Heart left ventricle (tissue), 16 donors: ENCODE measurements at regions of chr11 and their contacts with region 1.

Region 1: GRCh38 chr11:2305140-2305840 is 3.5 kb downstream of the TSPAN32 start:
- DNase-seq: peak; percentile 86 to 95 (median 87)
- ATAC-seq: peak in 3 of 4 donors; percentile 17 to 51 (median 47)
- H3K4me3 ChIP-seq: peak overlapping the region in 6 of 12 donors; percentile 5 to 33 (median 20)
- H3K27ac ChIP-seq: peak overlapping the region in 11 of 12 donors; percentile 64 to 98 (median 88)
- H3K4me1 ChIP-seq: peaks cover 9 to 64% (median 32%) of the 10 kb centered on the region in 12 donors
- H3K27me3 ChIP-seq: no peaks in the 10 kb centered on the region
- CTCF ChIP-seq: peak; percentile 85 to 97 (median 92)
- POLR2A ChIP-seq: no peak

Region 2: GRCh38 chr11:2208691-2209369 is 96.5 kb before region 1 on chr11:
- intact Hi-C with region 1: no loop called
- DNase-seq: peak in 3 of 5 donors; percentile 7 to 71 (median 20)
- ATAC-seq: peak in 1 of 4 donors; percentile 10
- H3K4me3 ChIP-seq: no peak overlapping the region
- H3K27ac ChIP-seq: no peak overlapping the region
- H3K4me1 ChIP-seq: no peaks in the 10 kb centered on the region
- H3K27me3 ChIP-seq: peaks cover 0 to 11% (median 0%) of the 10 kb centered on the region in 9 donors
- CTCF ChIP-seq: no peak
- POLR2A ChIP-seq: no peak

Region 3: GRCh38 chr11:2277008-2277346 is 28.3 kb before region 1 on chr11:
- intact Hi-C with region 1: no loop called
- DNase-seq: no peak
- ATAC-seq: no peak
- H3K4me3 ChIP-seq: no peak overlapping the region
- H3K27ac ChIP-seq: no peak overlapping the region
- H3K4me1 ChIP-seq: no peaks in the 10 kb centered on the region
- H3K27me3 ChIP-seq: peaks cover 0 to 11% (median 3%) of the 10 kb centered on the region in 9 donors
- CTCF ChIP-seq: no peak
- POLR2A ChIP-seq: no peak

Region 4: GRCh38 chr11:2290351-2290841 is 14.9 kb before region 1 on chr11:
- intact Hi-C with region 1: no loop called
- DNase-seq: peak in 1 of 5 donors; percentile 60
- ATAC-seq: peak in 1 of 4 donors; percentile 39
- H3K4me3 ChIP-seq: no peak overlapping the region
- H3K27ac ChIP-seq: peak overlapping the region in 2 of 12 donors; percentile 11 to 54
- H3K4me1 ChIP-seq: peaks cover 0 to 16% (median 3%) of the 10 kb centered on the region in 12 donors
- H3K27me3 ChIP-seq: peaks cover 0 to 3% (median 0%) of the 10 kb centered on the region in 9 donors
- CTCF ChIP-seq: no peak
- POLR2A ChIP-seq: no peak

Region 5: DNA sequence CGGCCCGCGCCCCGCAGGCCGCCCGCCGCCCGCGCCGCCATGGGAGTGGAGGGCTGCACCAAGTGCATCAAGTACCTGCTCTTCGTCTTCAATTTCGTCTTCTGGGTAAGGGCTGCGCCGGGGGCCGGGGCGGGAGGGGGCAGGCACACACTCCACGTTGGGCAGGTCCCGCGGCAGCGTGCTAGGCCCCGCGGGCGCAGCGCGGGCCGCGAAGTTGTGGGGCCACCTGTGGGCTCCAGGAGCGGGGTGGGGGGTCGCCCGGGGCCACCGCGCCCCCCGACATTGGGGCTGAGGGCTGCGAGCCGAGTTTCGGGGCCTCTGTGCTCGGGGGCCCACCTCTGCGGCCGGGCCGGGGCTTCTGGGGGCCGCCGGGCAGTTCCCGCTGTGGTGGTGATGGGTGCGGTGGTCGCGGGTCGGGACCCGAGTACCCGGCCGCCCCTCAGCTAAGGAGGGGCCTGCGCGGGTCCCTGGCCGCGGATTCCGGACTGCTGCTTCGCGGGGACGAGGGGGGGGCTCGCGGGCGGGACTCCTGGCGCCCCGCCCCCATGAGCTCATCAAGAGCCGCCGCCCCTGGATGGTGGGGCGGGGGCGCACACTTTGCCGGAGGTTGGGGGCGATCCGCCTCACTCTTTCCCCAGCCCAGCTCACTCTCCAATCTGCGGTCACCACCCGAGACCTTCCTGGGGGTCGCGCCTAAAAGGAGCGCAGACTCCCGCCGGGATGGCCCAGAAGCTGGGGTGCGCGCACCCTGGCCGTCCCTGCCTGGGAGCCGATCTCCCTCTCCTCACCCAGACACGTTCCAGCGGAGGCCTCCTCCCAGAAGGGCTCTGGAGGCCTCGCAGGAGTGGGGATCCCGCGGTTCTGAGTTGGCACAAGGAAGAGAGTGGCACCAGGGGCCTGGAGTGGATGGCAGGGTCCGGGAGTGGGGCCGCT is 72.5 kb after region 1 on chr11:
- intact Hi-C with region 1: loop called in 8 of 10 experiments (anchors 1 to 5 kb)
- DNase-seq: peak in 4 of 5 donors; percentile 79 to 86 (median 84)
- ATAC-seq: peak in 3 of 4 donors; percentile 23 to 48 (median 34)
- H3K4me3 ChIP-seq: peak overlapping the region; percentile 70 to 100 (median 100)
- H3K27ac ChIP-seq: peak overlapping the region; percentile 91 to 100 (median 99)
- H3K4me1 ChIP-seq: peaks cover 23 to 84% (median 50%) of the 10 kb centered on the region in 12 donors
- H3K27me3 ChIP-seq: no peaks in the 10 kb centered on the region
- CTCF ChIP-seq: no peak
- POLR2A ChIP-seq: no peak

Region 6: GRCh38 chr11:2400069-2400760 is 94.9 kb after region 1 on chr11 and contains the start of gene TSSC4:
- intact Hi-C with region 1: loop called in 9 of 10 experiments (anchors 1 to 5 kb)
- DNase-seq: peak; percentile 100
- ATAC-seq: peak; percentile 90 to 95 (median 92)
- H3K4me3 ChIP-seq: peak within 1 kb of the TSS; percentile 69 to 100 (median 86)
- H3K27ac ChIP-seq: peak within 1 kb of the TSS; percentile 76 to 100 (median 98)
- H3K4me1 ChIP-seq: peaks cover 0 to 27% (median 25%) of the 10 kb centered on the region in 12 donors
- H3K27me3 ChIP-seq: no peaks in the 10 kb centered on the region
- CTCF ChIP-seq: peak; percentile 95 to 100 (median 98)
- POLR2A ChIP-seq: peak in 1 of 2 donors; percentile 72
- total RNA-seq, gene TSSC4: 23.4 to 45.2 (median 37.2) TPM

Region 7: DNA sequence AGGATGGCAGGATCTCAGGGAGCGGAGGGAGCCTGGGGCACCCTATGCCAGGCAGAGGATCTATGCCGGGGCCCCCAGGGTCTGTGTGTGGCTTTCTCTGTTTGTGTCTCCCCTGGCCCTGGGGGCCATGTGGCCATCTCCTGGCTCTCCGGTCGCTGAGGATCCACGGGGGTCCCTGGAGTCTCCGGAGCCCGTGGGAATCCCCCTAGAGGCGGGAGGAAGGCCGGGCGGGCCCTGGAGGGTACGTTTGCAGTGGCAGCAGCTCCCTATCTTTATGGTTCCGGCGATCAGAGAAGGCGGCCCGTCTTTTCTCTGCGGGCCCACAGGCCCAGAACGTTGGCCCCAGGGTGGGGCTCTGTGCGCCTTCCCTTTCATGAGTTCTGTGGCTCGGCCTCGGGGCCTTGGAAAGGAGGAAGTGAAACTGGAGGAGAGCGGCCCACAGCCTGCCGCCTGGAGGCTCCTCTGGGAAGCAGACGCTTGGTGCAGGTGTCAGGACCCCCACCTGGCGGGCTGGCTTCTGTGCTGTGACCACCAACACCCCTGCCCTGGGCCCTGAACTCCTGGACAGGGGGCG is 221.6 kb after region 1 on chr11:
- intact Hi-C with region 1: loop called in 7 of 10 experiments (anchors 5 to 10 kb)
- DNase-seq: peak; percentile 51 to 81 (median 60)
- ATAC-seq: peak in 2 of 4 donors; percentile 24 to 51
- H3K4me3 ChIP-seq: peak overlapping the region in 5 of 12 donors; percentile 2 to 33 (median 23)
- H3K27ac ChIP-seq: peak overlapping the region in 3 of 12 donors; percentile 17 to 52 (median 29)
- H3K4me1 ChIP-seq: peaks cover 0 to 30% (median 10%) of the 10 kb centered on the region in 12 donors
- H3K27me3 ChIP-seq: no peaks in the 10 kb centered on the region
- CTCF ChIP-seq: peak in 3 of 12 donors; percentile 6 to 24 (median 19)
- POLR2A ChIP-seq: no peak

Region 8: DNA sequence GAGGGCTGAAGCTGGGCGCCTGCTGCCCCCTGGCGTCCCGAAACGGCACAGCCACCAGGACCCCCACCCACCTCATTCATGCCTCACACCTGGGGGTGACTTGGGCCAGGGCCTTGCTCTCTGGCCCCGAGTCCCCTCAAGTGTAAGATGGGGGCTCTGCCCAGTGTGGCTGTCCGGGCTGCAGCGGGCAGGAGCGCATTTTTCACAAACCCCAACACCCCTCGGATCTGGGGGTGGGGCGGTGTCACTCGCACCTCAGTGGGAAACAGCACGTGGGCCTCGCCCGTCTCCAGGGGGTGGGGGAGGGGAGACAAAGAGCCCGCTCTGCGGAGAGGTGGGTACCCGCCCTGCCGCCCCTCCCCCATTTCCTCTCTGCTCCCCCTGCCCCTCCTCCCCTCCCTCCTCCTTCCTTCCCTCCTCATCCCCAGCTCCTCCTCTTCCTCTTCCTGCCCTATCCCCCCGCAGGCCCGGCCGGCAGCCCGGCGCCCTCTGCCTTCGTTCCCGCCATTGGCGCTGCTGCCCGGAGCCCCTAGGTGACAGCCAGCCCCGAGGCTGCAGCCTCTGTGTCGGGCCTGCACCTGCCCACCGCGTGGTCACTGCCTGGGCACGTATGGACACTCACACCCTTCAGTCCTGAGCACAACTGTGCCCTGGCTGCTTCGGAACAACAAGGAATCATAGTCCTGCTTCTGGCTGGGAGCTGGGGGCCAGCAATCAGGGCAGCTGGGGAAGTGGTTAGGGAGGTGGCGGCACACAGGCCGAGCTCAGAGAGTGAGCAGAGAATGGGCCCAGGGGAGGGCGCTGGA is 587.1 kb after region 1 on chr11:
- intact Hi-C with region 1: loop called in 3 of 10 experiments (anchors 5 to 10 kb)
- DNase-seq: peak; percentile 63 to 84 (median 79)
- ATAC-seq: peak in 3 of 4 donors; percentile 44 to 70 (median 59)
- H3K4me3 ChIP-seq: peak overlapping the region in 11 of 12 donors; percentile 2 to 67 (median 52)
- H3K27ac ChIP-seq: peak overlapping the region in 10 of 12 donors; percentile 33 to 83 (median 50)
- H3K4me1 ChIP-seq: peaks cover 5 to 39% (median 25%) of the 10 kb centered on the region in 12 donors
- H3K27me3 ChIP-seq: peaks cover 0 to 2% (median 0%) of the 10 kb centered on the region in 9 donors
- CTCF ChIP-seq: peak; percentile 87 to 96 (median 92)
- POLR2A ChIP-seq: no peak